ENCODE measurements at regions of chr4 and their contacts with region 1.

Region 1: DNA sequence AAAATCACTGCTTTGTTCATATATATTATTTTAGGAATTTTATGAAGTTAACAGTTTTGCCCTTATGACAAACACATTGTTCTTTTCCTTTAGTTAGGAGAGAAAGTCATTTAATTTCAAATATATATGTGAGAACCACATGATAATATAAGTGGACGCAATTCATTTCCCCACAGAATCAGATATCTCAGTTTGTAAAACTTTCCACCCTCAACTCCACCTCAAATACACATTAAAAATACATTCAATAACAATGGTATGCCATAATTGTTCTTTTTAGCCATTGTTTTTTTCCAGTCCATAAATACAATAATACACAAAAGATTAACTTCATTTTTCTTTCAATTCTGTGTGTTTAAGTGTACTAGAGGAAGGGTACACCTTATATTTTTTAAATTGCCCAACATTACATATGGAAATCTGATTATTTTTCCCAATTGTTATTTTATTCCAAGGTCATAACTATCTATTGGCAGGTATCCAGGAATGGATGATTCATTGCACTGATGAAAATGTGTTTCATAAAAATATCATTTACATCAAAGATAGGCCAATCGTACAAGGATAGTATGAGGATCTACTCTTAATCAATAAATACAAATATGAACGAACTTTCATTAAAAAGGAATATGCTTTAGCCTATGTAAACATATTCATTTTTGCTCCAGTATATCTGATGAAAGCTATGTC is 125.0 kb downstream of the PPP3CA start:
- DNase-seq: no peak
- H3K4me3 Mint-ChIP-seq: no peak overlapping the region
- H3K27ac Mint-ChIP-seq: no peak overlapping the region
- H3K4me1 Mint-ChIP-seq: peaks cover 60% of the 10 kb centered on the region
- H3K27me3 Mint-ChIP-seq: no peaks in the 10 kb centered on the region
- CTCF ChIP-seq: no peak

Region 2: GRCh38 chr4:101050088-101050836 is 172.0 kb before region 1 on chr4:
- CTCF ChIA-PET with region 1: no interaction called
- intact Hi-C with region 1: no loop called
- DNase-seq: no peak
- H3K4me3 Mint-ChIP-seq: no peak overlapping the region
- H3K27ac Mint-ChIP-seq: no peak overlapping the region
- H3K4me1 Mint-ChIP-seq: no peaks in the 10 kb centered on the region
- H3K27me3 Mint-ChIP-seq: no peaks in the 10 kb centered on the region
- CTCF ChIP-seq: no peak

Region 3: DNA sequence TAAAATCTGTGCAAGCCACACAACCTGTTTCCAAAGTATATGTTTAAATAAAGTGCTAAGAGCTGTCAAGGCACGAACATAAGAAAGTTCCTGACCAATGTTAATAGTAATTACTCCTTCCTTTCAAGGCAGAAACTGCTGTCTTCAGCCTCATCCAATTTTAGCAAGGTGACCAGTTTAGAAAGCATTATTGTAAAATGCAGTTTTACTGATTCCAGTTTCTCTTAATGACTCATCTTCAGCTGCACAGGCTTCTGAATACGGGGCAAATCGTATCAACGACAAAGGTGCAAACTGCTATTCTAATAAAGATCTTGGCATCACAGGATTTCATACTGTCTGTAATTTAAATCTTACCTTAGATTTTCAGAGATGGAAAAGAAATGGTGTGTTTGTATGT is 37.6 kb after region 1 on chr4:
- CTCF ChIA-PET with region 1: no interaction called
- intact Hi-C with region 1: loop called (anchors 5 kb)
- DNase-seq: no peak
- H3K4me3 Mint-ChIP-seq: no peak overlapping the region
- H3K27ac Mint-ChIP-seq: no peak overlapping the region
- H3K4me1 Mint-ChIP-seq: peaks cover 23% of the 10 kb centered on the region
- H3K27me3 Mint-ChIP-seq: no peaks in the 10 kb centered on the region
- CTCF ChIP-seq: no peak

Measured in Calu3 (cell line).